ENCODE measurements at regions of chr20 and their contacts with region 1.

Region 1: DNA sequence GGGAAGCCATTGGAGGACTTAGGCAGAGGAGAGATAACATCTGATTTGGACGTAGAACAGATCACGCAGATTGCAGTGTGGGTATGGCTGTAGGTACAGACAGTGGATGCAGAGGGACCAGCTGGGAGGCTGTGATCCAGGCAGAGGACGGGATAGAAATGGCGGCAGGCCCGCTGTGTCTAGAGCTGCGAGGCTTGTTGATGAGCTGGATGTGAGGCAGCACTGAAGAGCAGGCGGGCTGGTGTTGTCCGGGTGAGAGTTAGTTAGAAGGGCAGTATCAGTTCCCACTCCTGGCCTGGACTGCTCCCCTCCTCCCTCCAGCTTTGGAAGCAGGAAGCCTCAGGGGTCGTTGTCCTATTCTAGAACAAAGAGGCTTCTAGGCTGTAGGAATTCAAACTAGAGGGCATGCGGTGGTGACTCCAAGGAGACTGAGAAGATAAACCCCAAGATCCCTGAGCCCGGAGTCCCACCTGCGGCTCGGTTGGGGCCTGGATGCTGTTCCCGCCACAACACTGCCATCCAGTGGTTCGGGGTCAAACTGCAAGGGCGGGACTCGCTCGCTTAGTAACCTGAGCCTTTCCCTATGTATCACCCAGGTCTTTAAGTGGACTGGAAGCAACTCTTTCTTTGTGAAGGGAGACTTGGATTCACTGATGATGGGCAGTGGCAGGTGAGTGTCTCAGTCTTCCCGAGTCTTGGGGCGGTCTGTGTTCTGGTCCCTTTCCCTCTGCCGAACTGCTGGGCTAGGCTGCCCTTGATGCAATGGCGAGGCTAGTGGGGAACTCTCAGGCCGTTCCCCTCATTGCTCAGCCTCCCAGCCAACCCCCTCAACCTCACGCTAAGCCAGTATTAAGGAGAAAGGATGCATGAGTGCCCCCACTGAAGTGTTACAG is 11.2 kb downstream of the TLDC2 start:
- DNase-seq: peak; percentile 70 to 85 (median 76)
- H3K4me3 ChIP-seq: peak overlapping the region in 1 of 7 experiments; percentile 45
- H3K27ac ChIP-seq: no peak overlapping the region
- H3K4me1 ChIP-seq: peaks cover 0 to 6% (median 0%) of the 10 kb centered on the region in 4 experiments
- H3K27me3 ChIP-seq: no peaks in the 10 kb centered on the region

Region 2: DNA sequence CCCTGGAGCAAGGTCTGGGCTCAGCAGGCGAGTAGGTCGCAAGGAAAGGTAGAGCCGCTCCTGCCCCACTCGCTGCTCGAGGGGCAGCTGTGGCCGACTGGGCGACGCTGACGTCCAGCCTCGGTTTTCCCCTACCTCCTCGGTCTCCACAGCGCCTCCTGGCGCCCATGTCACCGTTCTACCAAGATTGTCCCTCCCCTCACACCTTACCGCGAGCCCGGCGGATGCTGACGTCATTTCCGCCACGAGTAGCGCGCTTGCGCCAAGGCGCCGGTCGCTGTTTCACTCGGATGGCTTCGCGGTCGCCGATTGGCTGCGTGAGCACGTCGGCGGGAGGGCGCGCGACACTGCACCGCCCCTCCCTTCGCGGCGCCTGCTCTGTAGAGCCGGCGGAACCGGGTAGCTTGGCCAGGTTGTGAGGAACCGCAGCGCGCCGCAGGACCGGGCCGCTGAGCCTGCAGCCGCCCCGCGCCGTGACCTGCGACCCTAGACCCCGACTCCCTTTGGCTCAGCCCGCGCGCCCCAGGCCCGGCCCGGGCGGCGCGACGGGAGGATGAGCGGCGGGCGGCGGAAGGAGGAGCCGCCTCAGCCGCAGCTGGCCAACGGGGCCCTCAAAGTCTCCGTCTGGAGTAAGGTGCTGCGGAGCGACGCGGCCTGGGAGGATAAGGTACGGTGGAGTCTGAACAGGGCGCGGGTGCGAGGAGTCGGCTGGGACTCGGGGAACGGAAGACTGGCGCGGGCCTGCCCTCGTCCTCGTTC is 281.5 kb before region 1 on chr20 and contains the start of gene RAB5IF:
- CTCF ChIA-PET with region 1: no interaction called
- POLR2A ChIA-PET with region 1: no interaction called
- DNase-seq: peak; percentile 99 to 100 (median 99)
- H3K4me3 ChIP-seq: peak within 1 kb of the TSS; percentile 81 to 99 (median 96)
- H3K27ac ChIP-seq: peak within 1 kb of the TSS; percentile 82 to 92
- H3K4me1 ChIP-seq: peaks cover 8 to 38% (median 26%) of the 10 kb centered on the region in 4 experiments
- H3K27me3 ChIP-seq: no peaks in the 10 kb centered on the region

Region 3: DNA sequence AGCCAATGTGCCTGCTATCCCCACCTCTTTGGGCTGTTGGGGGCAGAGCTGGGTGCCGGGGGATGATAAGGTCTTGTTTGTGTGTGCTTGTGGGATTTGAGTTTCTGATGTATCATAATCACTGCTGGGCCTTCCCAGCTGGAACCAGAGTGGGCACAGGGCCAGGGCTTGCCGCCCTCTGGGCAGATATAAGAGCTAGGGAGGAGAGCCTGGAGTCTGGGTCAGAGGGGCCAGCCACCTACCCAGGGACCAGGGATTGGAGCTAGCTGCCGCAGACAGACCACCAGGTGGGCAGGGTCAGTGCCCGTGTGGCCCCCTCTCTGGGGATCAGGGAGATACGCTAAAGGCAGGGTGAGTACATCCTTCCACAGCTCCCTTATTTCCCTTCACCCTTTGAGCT is 14.3 kb before region 1 on chr20:
- CTCF ChIA-PET with region 1: interaction called, 17 read pairs
- POLR2A ChIA-PET with region 1: no interaction called
- DNase-seq: peak in 1 of 3 donors; percentile 29
- H3K4me3 ChIP-seq: no peak overlapping the region
- H3K27ac ChIP-seq: no peak overlapping the region
- H3K4me1 ChIP-seq: peaks cover 0 to 34% (median 2%) of the 10 kb centered on the region in 4 experiments
- H3K27me3 ChIP-seq: no peaks in the 10 kb centered on the region